ENCODE measurements at regions of chr19 and their contacts with region 1.

Region 1: DNA sequence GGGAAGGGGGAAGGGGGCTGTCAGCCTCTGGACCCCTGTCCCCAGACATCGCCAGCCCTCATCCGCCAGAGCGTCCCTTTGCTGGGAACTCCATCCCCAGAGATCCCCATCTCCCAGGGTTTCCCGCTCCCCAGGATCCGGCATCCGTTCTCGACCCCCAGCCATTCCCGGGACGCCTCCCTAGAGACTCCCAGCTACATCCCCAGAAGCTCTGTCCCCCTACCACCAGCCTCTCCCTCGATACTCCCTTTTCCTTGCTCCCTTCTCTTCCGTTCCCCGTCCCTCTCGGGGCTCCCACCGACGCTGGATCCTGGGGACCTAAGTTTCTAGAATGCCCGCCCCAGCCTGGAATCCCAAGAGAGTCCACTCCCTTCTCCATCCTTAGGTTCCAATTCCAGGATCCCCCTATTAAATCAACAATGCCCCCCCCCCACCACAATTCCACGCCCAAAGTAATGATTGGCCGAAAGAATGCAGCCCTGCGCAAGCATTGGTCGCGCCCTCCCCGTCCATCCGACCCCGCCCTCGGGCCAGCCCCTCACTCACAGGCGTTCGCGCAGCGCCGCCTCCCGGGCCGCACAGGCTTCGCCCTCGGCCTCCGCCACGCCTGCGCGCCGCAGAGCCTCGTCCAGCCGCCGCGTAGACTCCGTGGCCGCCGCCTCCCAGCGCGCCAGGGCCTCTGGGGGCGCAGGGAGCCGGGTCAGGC is 3.2 kb downstream of the CCDC194 start:
- DNase-seq: peak; percentile 95
- ATAC-seq: peak; percentile 98 to 99

Region 2: GRCh38 chr19:17292286-17293097 is 98.3 kb before region 1 on chr19:
- intact Hi-C with region 1: loop called in 1 of 2 experiments (anchors 5 kb)
- DNase-seq: peak; percentile 75
- ATAC-seq: peak; percentile 94

Region 3: DNA sequence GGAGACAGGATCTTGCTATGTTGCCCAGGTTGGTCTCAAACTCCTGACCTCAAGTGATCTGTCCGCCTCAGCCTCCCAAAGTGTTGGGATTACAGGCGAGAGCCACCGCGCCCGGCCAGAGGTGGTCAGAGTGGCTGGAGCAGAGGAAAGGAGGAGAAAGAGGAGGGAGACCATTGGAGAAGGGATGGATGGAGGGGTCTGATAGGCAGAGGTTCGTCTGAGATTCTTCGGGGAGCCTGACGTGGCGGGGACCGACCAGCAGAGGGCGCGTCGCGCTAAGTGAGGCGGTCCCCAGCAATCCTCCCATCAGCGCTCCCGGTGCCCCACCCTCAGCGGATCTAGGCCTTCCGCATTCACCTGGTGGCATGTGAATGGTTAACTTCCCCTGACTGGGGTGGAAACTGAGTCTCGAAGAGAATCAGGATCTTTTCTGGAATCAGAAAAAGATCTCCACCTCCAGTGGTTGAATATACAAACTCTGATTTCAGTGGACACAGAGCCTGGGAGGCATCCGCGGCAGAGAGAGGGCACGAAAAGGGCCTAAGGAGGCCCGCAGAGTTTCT is 44.6 kb before region 1 on chr19:
- intact Hi-C with region 1: loop called (anchors 1 to 5 kb)
- DNase-seq: peak; percentile 82
- ATAC-seq: peak; percentile 82 to 84

Region 4: DNA sequence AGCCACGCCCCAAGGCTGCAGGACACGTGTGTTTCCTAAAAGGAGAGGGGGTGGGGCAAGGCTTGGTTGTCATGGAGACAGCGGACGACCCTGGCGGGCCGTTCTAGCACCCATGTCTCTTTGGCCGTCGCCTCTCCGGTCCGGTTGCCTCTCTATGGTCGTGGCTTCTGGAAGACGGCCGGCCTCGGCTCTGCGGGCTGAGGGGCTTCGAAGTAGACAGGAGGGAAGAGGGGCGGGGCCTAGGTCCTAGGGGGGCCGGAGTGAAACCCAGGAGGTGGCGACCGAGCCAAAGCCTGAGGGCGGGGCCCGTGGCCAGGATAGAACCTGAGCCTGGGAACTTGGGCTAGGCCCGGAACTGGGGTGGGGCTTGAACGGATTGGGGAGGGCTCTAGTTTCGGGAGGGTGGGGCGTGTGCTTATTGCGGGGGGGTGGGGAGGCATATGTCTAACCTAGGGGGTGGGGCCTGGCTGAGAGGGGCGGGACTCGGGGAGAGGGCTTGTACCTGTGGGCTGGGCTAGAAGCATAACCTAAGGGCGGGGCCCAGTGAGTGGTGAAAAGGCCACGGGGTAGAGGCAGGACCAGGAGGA is 78.8 kb after region 1 on chr19:
- intact Hi-C with region 1: loop called in 1 of 2 experiments (anchors 10 kb)
- DNase-seq: peak; percentile 96
- ATAC-seq: peak; percentile 75 to 87

Measured in left cardiac atrium (tissue), 4 donors.